BJ (cell line): ENCODE measurements at regions of chr20 and their contacts with region 1.

Region 1: DNA sequence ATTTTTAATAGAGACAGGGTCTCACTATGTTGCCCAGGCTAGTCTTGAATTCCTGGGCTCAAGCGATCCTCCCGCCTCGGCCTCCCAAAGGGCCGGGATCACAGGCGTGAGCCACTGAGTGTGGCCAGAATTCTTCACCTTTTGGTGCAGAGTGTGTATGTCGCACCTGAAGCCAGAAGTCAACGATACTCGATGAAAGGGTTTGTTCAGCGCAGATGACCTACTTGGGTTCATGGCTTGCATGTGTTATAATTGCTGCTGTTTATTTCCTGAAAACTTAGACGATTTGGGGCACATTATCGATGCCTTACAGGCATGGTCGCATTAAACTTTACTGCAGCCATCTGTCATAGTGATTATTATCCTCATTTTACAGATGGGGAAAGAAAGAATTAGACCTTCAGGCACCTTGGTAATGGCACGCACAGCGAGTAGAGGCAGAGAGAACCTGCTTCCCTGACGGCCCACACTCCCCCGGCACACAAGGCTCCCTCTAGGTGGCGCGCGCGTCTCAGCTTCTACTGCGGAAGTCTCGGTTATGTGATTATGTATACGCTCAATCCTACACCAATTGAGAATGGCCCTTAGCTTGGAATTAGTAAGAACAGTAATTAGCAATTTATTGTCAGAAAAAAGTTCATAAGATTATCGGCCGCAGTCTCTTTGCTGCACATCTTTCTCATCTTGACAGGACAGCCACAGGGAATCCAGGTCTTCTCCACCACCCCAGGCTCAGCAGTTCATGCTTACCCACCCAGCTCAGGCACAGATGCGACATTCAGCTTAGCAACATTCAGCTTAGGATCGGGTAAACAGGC is 212.8 kb upstream of the PROKR2 start:
- DNase-seq: peak; percentile 9
- H3K4me3 ChIP-seq: no peak overlapping the region
- H3K27me3 ChIP-seq: no peaks in the 10 kb centered on the region
- CTCF ChIP-seq: peak; percentile 96

Region 2: GRCh38 chr20:5513975-5514516 is 15.5 kb before region 1 on chr20:
- CTCF ChIA-PET with region 1: interaction called, 11 read pairs
- POLR2A ChIA-PET with region 1: no interaction called
- DNase-seq: peak; percentile 9
- H3K4me3 ChIP-seq: no peak overlapping the region
- H3K27me3 ChIP-seq: no peaks in the 10 kb centered on the region
- CTCF ChIP-seq: no peak

Region 3: GRCh38 chr20:5550733-5551529 is 21.4 kb after region 1 on chr20:
- CTCF ChIA-PET with region 1: interaction called, 16 read pairs
- POLR2A ChIA-PET with region 1: no interaction called
- DNase-seq: no peak
- H3K4me3 ChIP-seq: no peak overlapping the region
- H3K27me3 ChIP-seq: no peaks in the 10 kb centered on the region
- CTCF ChIP-seq: no peak

Region 4: DNA sequence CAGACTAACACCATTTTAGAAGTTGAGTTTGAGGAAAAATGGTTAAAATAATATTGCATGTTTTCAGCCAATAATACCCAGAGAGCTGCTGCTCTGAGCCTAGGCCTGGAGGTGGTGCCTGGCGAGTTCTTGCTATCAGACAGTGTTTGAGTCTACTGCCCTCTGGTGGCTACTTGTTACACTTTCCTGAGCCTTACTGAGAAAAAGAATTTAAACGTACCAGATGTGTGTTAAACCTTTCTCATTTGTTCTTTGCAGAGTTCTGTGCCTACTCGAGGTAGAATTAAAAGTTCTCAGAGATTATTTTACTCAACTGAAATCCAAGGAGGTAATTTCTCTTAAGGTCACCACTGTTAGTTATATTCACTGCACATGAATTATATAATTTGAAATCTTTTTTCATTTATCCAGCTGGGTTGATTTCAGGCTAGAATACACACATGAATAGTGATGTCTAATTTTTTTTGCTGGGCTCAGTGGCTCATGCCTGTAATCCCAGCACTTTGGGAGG is 258.9 kb after region 1 on chr20:
- CTCF ChIA-PET with region 1: interaction called, 148 read pairs
- POLR2A ChIA-PET with region 1: no interaction called
- DNase-seq: peak; percentile 22
- H3K4me3 ChIP-seq: no peak overlapping the region
- H3K27me3 ChIP-seq: no peaks in the 10 kb centered on the region
- CTCF ChIP-seq: peak; percentile 81

Region 5: GRCh38 chr20:6074145-6074561 is 544.6 kb after region 1 on chr20:
- CTCF ChIA-PET with region 1: interaction called, 93 read pairs
- POLR2A ChIA-PET with region 1: no interaction called
- DNase-seq: no peak
- H3K4me3 ChIP-seq: no peak overlapping the region
- H3K27me3 ChIP-seq: no peaks in the 10 kb centered on the region
- CTCF ChIP-seq: peak; percentile 44